Left cardiac atrium (tissue), 4 donors: ENCODE measurements at regions of chr2 and their contacts with region 1.

Region 1: DNA sequence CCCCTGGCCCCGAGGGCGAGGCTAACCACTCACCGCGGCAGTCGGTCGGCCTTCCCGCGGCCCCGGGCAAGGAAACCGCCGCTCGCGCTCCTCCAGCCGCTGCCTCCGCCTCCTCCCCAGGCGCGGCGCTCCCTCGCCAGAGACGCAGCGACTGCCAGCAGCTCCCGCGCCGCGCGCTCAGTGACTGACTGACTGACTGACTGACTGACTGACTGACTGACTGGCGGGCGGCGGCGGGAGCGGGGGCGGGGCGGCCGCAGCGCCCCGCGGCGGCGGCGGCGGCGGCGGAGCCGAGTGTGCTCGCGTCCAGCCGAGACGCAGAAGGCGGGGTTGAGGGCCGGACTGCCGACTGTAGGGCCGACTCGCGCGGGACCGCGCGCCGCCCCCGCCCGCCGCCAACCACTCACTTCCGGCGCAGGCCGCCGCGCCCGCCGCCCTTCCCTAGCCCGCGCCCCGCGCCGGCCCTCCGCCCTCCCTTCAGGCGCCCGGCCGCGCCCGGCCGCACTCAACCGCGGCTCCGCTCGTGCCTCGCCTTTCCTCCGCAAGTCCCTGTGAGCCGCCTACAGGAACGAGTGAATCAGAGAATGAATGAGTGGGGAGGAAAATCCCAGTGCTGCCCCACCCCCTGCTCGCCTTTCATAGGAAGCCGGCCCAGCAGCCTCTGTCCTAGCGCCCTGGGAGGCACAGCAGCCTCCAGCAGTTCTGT is at the start of gene RAPH1:
- DNase-seq: peak; percentile 92
- ATAC-seq: peak; percentile 95 to 97
- total RNA-seq, gene RAPH1: 17.8 to 39.3 TPM

Region 2: GRCh38 chr2:203185864-203186263 is 349.4 kb before region 1 on chr2:
- intact Hi-C with region 1: no loop called
- DNase-seq: no peak
- ATAC-seq: no peak

Region 3: GRCh38 chr2:203376173-203376572 is 159.1 kb before region 1 on chr2:
- intact Hi-C with region 1: no loop called
- DNase-seq: no peak
- ATAC-seq: no peak

Region 4: GRCh38 chr2:203683932-203684556 is 148.8 kb after region 1 on chr2:
- intact Hi-C with region 1: loop called in 1 of 2 experiments (anchors 10 kb)
- DNase-seq: peak; percentile 33
- ATAC-seq: peak in 1 of 2 donors; percentile 45

Region 5: GRCh38 chr2:203706403-203706802 is 171.2 kb after region 1 on chr2 and contains the start of gene CD28:
- intact Hi-C with region 1: no loop called
- DNase-seq: peak; percentile 36
- ATAC-seq: peak; percentile 67 to 88
- total RNA-seq, gene CD28: 2.5 to 2.9 TPM